Dorsolateral prefrontal cortex (tissue), 120 donors: ENCODE measurements at regions of chr6 and their contacts with region 1.

Region 1: GRCh38 chr6:152948150-152948768 is 34.6 kb downstream of the FBXO5 start:
- DNase-seq: peak in 1 of 10 donors; percentile 11
- H3K4me3 ChIP-seq: peak overlapping the region in 37 of 59 donors; percentile 2 to 55 (median 21)
- H3K27ac ChIP-seq: no peak overlapping the region
- H3K27me3 ChIP-seq: peaks cover 0 to 16% (median 0%) of the 10 kb centered on the region in 45 donors
- CTCF ChIP-seq: peak; percentile 47 to 90 (median 71)

Region 2: GRCh38 chr6:152496731-152497130 is 451.5 kb before region 1 on chr6:
- intact Hi-C with region 1: loop called in 1 of 2 experiments (anchors 5 kb)
- DNase-seq: no peak
- H3K4me3 ChIP-seq: no peak overlapping the region
- H3K27ac ChIP-seq: no peak overlapping the region
- H3K27me3 ChIP-seq: no peaks in the 10 kb centered on the region
- CTCF ChIP-seq: no peak

Region 3: GRCh38 chr6:152750694-152751093 is 197.6 kb before region 1 on chr6 and contains the start of gene VIP:
- intact Hi-C with region 1: loop called (anchors 5 to 10 kb)
- DNase-seq: no peak
- H3K4me3 ChIP-seq: peak within 1 kb of the TSS in 1 of 59 donors; percentile 2
- H3K27ac ChIP-seq: no peak within 1 kb of the TSS
- H3K27me3 ChIP-seq: peaks cover 0 to 6% (median 0%) of the 10 kb centered on the region in 45 donors
- CTCF ChIP-seq: no peak
- total RNA-seq, gene VIP: 0.91 to 22.8 (median 6.1) TPM

Region 4: GRCh38 chr6:152863618-152864326 is 84.5 kb before region 1 on chr6:
- intact Hi-C with region 1: loop called (anchors 5 kb)
- DNase-seq: peak in 6 of 10 donors; percentile 43 to 80 (median 60)
- H3K4me3 ChIP-seq: no peak overlapping the region
- H3K27ac ChIP-seq: no peak overlapping the region
- H3K27me3 ChIP-seq: peaks cover 0 to 12% (median 0%) of the 10 kb centered on the region in 45 donors
- CTCF ChIP-seq: peak; percentile 61 to 92 (median 80)